ENCODE measurements at regions of chr18 and their contacts with region 1.

Region 1: GRCh38 chr18:54585743-54586142 is 5.3 kb upstream of the DYNAP start:
- DNase-seq: no peak

Region 2: GRCh38 chr18:54607215-54607934 is 21.6 kb after region 1 on chr18:
- intact Hi-C with region 1: loop called in 1 of 2 experiments (anchors 1 kb)
- DNase-seq: no peak